ENCODE measurements at regions of chr6 and their contacts with region 1.

Region 1: DNA sequence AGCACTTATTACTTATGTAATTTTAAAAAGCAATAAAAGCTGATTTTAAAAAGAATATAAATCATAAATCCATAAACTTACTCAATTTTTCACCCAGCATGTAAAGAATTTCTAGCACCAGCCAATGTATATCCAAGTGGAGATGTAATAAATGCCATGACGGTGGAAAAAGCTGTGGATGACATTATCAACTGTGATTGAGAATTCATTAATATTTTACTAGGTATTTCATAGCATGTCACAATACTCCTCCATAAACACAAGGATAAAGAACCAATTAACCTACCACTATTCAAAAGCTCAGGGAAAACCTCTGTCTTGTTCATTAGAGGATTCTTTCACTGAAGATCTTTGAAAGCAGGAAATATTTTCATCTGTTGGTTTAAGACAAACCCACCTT is 13.2 kb downstream of the MMS22L start:
- DNase-seq: no peak
- ATAC-seq: no peak
- H3K4me3 ChIP-seq: no peak overlapping the region
- H3K27ac ChIP-seq: no peak overlapping the region
- H3K4me1 ChIP-seq: no peaks in the 10 kb centered on the region
- H3K27me3 ChIP-seq: no peaks in the 10 kb centered on the region
- CTCF ChIP-seq: no peak
- POLR2A ChIP-seq: no peak
- RAD21 ChIP-seq: no peak

Region 2: GRCh38 chr6:97246842-97247241 is 23.0 kb before region 1 on chr6:
- CTCF ChIA-PET with region 1: interaction called, 3 read pairs
- POLR2A ChIA-PET with region 1: no interaction called
- dilution Hi-C with region 1: no loop called
- in situ Hi-C with region 1: no loop called
- intact Hi-C with region 1: loop called (anchors 2 kb)
- DNase-seq: no peak
- ATAC-seq: no peak
- H3K4me3 ChIP-seq: no peak overlapping the region
- H3K27ac ChIP-seq: no peak overlapping the region
- H3K4me1 ChIP-seq: no peaks in the 10 kb centered on the region
- H3K27me3 ChIP-seq: no peaks in the 10 kb centered on the region
- CTCF ChIP-seq: no peak
- POLR2A ChIP-seq: no peak
- RAD21 ChIP-seq: no peak

Region 3: DNA sequence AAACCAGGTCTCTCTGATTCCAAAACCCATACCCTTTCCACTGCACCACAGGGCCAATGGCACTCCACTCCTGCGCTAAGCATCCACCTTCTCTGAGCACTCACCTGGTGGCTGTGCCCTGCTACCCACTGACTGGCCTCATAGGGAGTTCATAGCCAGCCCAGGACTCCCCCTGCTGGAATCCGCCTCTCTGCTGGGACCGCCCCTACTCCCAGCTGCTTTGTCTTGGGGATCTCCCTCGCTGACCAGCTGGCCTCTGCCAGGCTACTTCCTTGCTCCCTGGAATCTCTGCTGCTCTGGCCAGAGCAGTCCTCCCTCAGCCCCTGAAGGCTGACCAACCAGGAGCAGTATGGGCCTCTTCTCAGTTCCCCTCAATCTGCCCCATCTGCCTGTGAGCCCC is 1950.0 kb after region 1 on chr6:
- CTCF ChIA-PET with region 1: no interaction called
- POLR2A ChIA-PET with region 1: no interaction called
- dilution Hi-C with region 1: no loop called
- in situ Hi-C with region 1: no loop called
- intact Hi-C with region 1: no loop called
- DNase-seq: no peak
- ATAC-seq: no peak
- H3K4me3 ChIP-seq: no peak overlapping the region
- H3K27ac ChIP-seq: no peak overlapping the region
- H3K4me1 ChIP-seq: no peaks in the 10 kb centered on the region
- H3K27me3 ChIP-seq: no peaks in the 10 kb centered on the region
- CTCF ChIP-seq: no peak
- POLR2A ChIP-seq: no peak
- RAD21 ChIP-seq: no peak